ENCODE measurements at regions of chr18 and their contacts with region 1.

Region 1: GRCh38 chr18:1062588-1062987 is 157.9 kb downstream of the ADCYAP1 start:
- DNase-seq: no peak
- ATAC-seq: no peak
- H3K4me3 ChIP-seq: no peak overlapping the region
- H3K27ac ChIP-seq: no peak overlapping the region
- H3K4me1 ChIP-seq: no peaks in the 10 kb centered on the region
- H3K27me3 ChIP-seq: no peaks in the 10 kb centered on the region
- CTCF ChIP-seq: no peak

Region 2: GRCh38 chr18:1213126-1213525 is 150.5 kb after region 1 on chr18:
- intact Hi-C with region 1: loop called in 1 of 10 experiments (anchors 10 kb)
- DNase-seq: no peak
- ATAC-seq: no peak
- H3K4me3 ChIP-seq: no peak overlapping the region
- H3K27ac ChIP-seq: no peak overlapping the region
- H3K4me1 ChIP-seq: no peaks in the 10 kb centered on the region
- H3K27me3 ChIP-seq: peaks cover 0 to 2% (median 0%) of the 10 kb centered on the region in 7 donors
- CTCF ChIP-seq: no peak